RWPE1 (cell line): ENCODE measurements at regions of chr17 and their contacts with region 1.

Region 1: GRCh38 chr17:62064791-62065563 is at the start of gene MED13:
- DNase-seq: peak; percentile 63
- H3K27ac ChIP-seq: peak within 1 kb of the TSS; percentile 93
- CTCF ChIP-seq: no peak

Region 2: GRCh38 chr17:62014526-62014925 is 50.5 kb before region 1 on chr17:
- CTCF ChIA-PET with region 1: no interaction called
- POLR2A ChIA-PET with region 1: no interaction called
- DNase-seq: no peak
- H3K27ac ChIP-seq: no peak overlapping the region
- CTCF ChIP-seq: no peak

Region 3: GRCh38 chr17:62035606-62036005 is 29.4 kb before region 1 on chr17:
- CTCF ChIA-PET with region 1: no interaction called
- POLR2A ChIA-PET with region 1: interaction called, 13 read pairs
- DNase-seq: no peak
- H3K27ac ChIP-seq: no peak overlapping the region
- CTCF ChIP-seq: no peak